ENCODE measurements at regions of chr12 and their contacts with region 1.

Region 1: DNA sequence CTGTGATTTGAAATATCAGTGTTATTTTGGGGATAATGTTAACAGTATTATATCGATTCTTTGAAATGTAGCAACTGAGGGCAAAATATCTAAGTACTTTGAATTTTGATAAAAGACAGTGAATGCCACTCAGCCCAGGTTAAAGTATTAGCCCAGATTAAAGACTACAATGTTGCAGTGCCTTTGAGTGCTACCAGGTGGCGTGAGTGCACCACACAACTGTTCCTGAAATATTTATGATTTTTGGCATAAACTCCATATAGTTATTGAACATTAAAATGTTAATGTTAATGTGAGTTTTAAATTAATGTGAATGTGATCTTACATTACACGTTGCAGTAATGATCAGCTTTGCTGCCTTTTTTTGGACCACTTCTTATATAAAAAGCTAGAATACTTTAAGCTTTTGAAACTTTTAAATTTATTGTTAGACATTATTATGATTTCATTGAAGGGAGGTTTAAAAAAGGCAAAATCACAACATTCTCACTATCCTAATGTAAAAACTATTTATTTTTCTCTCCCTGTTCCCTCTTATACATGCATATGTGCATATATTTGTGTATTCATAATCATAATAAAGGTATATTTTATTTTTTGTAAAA is 22.5 kb downstream of the MRPS35 start:
- DNase-seq: peak; percentile 9
- H3K4me3 ChIP-seq: no peak overlapping the region
- H3K27ac ChIP-seq: no peak overlapping the region
- H3K4me1 ChIP-seq: no peaks in the 10 kb centered on the region
- H3K27me3 ChIP-seq: no peaks in the 10 kb centered on the region
- CTCF ChIP-seq: peak; percentile 91 to 93

Region 2: DNA sequence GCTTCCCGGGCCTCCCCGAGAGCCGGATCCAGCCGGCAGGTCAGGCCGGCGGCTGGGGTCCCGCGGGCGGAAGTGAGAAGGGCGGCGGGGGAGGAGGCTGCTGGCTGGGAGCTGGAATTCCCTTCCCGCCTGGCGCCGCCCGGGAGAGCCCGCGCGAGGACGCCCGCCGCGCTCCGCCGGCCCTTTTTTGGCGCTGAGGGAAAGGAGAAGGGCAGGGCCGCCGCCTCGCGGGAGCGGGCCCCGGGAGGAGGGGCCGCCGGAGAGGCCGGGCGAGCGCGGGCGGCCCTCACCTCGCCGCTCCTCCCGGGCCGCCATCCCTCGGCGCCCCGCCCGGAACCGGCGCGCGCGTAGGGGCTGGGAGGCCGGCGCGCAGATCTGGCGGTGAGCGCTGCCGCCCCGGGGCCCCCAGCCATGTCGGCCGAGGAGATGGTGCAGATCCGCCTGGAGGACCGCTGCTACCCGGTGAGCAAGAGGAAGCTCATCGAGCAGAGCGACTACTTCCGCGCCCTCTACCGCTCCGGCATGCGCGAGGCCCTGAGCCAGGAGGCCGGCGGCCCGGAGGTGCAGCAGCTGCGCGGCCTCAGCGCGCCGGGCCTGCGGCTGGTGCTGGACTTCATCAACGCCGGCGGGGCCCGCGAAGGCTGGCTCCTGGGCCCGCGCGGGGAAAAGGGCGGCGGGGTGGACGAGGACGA is 46.9 kb after region 1 on chr12 and contains the starts of genes KLHL42 and MANSC4:
- CTCF ChIA-PET with region 1: no interaction called
- dilution Hi-C with region 1: loop called (anchors 5 kb)
- in situ Hi-C with region 1: no loop called
- intact Hi-C with region 1: loop called (anchors 2 kb)
- DNase-seq: peak; percentile 72
- H3K4me3 ChIP-seq: peak within 1 kb of the TSS; percentile 40 to 95 (median 71)
- H3K27ac ChIP-seq: peak within 1 kb of the TSS; percentile 69
- H3K4me1 ChIP-seq: peaks cover 21% of the 10 kb centered on the region
- H3K27me3 ChIP-seq: no peaks in the 10 kb centered on the region
- CTCF ChIP-seq: peak in 1 of 2 donors; percentile 7
- total RNA-seq, gene KLHL42: 35.0 to 40.3 TPM
- total RNA-seq, gene MANSC4: not detected

Region 3: GRCh38 chr12:27814851-27815591 is 81.9 kb after region 1 on chr12:
- CTCF ChIA-PET with region 1: no interaction called
- dilution Hi-C with region 1: loop called (anchors 5 kb)
- in situ Hi-C with region 1: no loop called
- intact Hi-C with region 1: no loop called
- DNase-seq: no peak
- H3K4me3 ChIP-seq: no peak overlapping the region
- H3K27ac ChIP-seq: no peak overlapping the region
- H3K4me1 ChIP-seq: no peaks in the 10 kb centered on the region
- H3K27me3 ChIP-seq: no peaks in the 10 kb centered on the region
- CTCF ChIP-seq: no peak

Region 4: GRCh38 chr12:27840244-27840999 is 107.3 kb after region 1 on chr12:
- CTCF ChIA-PET with region 1: interaction called, 5 read pairs
- dilution Hi-C with region 1: no loop called
- in situ Hi-C with region 1: no loop called
- intact Hi-C with region 1: loop called (anchors 1 kb)
- DNase-seq: no peak
- H3K4me3 ChIP-seq: no peak overlapping the region
- H3K27ac ChIP-seq: no peak overlapping the region
- H3K4me1 ChIP-seq: peaks cover 8% of the 10 kb centered on the region
- H3K27me3 ChIP-seq: no peaks in the 10 kb centered on the region
- CTCF ChIP-seq: peak; percentile 45 to 55

Region 5: GRCh38 chr12:27940756-27941402 is 207.7 kb after region 1 on chr12:
- CTCF ChIA-PET with region 1: interaction called, 3 read pairs
- dilution Hi-C with region 1: no loop called
- in situ Hi-C with region 1: loop called in 1 of 2 experiments (anchors 5 kb)
- intact Hi-C with region 1: loop called (anchors 1 kb)
- DNase-seq: peak; percentile 68
- H3K4me3 ChIP-seq: no peak overlapping the region
- H3K27ac ChIP-seq: no peak overlapping the region
- H3K4me1 ChIP-seq: no peaks in the 10 kb centered on the region
- H3K27me3 ChIP-seq: no peaks in the 10 kb centered on the region
- CTCF ChIP-seq: peak; percentile 84 to 92

Region 6: GRCh38 chr12:28872654-28873268 is 1139.6 kb after region 1 on chr12:
- CTCF ChIA-PET with region 1: interaction called, 5 read pairs
- dilution Hi-C with region 1: no loop called
- in situ Hi-C with region 1: no loop called
- intact Hi-C with region 1: loop called (anchors 1 kb)
- DNase-seq: peak; percentile 78
- H3K4me3 ChIP-seq: no peak overlapping the region
- H3K27ac ChIP-seq: no peak overlapping the region
- H3K4me1 ChIP-seq: peaks cover 39% of the 10 kb centered on the region
- H3K27me3 ChIP-seq: no peaks in the 10 kb centered on the region
- CTCF ChIP-seq: peak; percentile 87 to 88

Measured in mammary epithelial cell (primary cell).